Activated CD8-positive, alpha-beta T cell treated with anti-CD3 and anti-CD28 coated beads for 36 hours (primary cell): ENCODE measurements at regions of chr19 and their contacts with region 1.

Region 1: GRCh38 chr19:14059093-14059480 is 2.8 kb downstream of the PALM3 start:
- DNase-seq: peak; percentile 77
- ATAC-seq: peak; percentile 77
- H3K4me3 Mint-ChIP-seq: no peak overlapping the region
- H3K27ac Mint-ChIP-seq: no peak overlapping the region
- H3K4me1 Mint-ChIP-seq: peaks cover 16% of the 10 kb centered on the region
- H3K27me3 Mint-ChIP-seq: peaks cover 37% of the 10 kb centered on the region
- CTCF ChIP-seq: peak; percentile 91

Region 2: GRCh38 chr19:14048443-14049153 is 10.5 kb before region 1 on chr19:
- CTCF ChIA-PET with region 1: interaction called, 69 read pairs
- POLR2A ChIA-PET with region 1: no interaction called
- intact Hi-C with region 1: no loop called
- DNase-seq: peak; percentile 85
- ATAC-seq: peak; percentile 97
- H3K4me3 Mint-ChIP-seq: no peak overlapping the region
- H3K27ac Mint-ChIP-seq: no peak overlapping the region
- H3K4me1 Mint-ChIP-seq: peaks cover 13% of the 10 kb centered on the region
- H3K27me3 Mint-ChIP-seq: no peaks in the 10 kb centered on the region
- CTCF ChIP-seq: peak; percentile 96

Region 3: GRCh38 chr19:14081325-14082093 is 22.4 kb after region 1 on chr19:
- CTCF ChIA-PET with region 1: interaction called, 24 read pairs
- POLR2A ChIA-PET with region 1: no interaction called
- intact Hi-C with region 1: no loop called
- DNase-seq: peak; percentile 99
- ATAC-seq: peak; percentile 94
- H3K4me3 Mint-ChIP-seq: peak overlapping the region; percentile 96
- H3K27ac Mint-ChIP-seq: peak overlapping the region; percentile 93
- H3K4me1 Mint-ChIP-seq: peaks cover 12% of the 10 kb centered on the region
- H3K27me3 Mint-ChIP-seq: no peaks in the 10 kb centered on the region
- CTCF ChIP-seq: no peak